Activated B cell treated with CpG ODN at 0.5 μM for 24 hours (primary cell): ENCODE measurements at regions of chr12 and their contacts with region 1.

Region 1: DNA sequence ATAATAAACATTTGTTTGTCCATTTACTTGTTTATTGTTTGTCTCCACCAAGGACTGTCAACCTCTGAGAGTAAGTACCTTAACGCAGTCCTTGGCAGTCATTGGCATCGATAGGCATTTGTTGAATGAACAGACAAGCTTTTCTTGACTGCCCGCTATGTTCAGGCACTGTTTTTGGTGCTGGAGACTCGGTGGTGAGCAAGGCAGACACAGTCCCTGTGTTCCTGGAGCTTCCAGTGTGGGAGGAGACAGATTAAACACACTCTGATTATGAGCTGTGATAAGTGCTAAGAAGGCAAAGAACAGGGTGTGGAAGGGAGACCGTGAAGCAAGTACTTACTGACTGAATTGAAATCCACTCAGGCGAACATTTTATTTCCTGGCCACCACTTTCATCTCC is 1.2 kb downstream of the ATP6V0A2 start:
- DNase-seq: no peak
- ATAC-seq: no peak
- H3K4me3 Mint-ChIP-seq: peak overlapping the region; percentile 92
- H3K27ac Mint-ChIP-seq: peak overlapping the region; percentile 80
- H3K4me1 Mint-ChIP-seq: peaks cover 37% of the 10 kb centered on the region
- H3K27me3 Mint-ChIP-seq: no peaks in the 10 kb centered on the region
- CTCF ChIP-seq: no peak

Region 2: GRCh38 chr12:123643911-123644310 is 69.5 kb before region 1 on chr12:
- CTCF ChIA-PET with region 1: no interaction called
- POLR2A ChIA-PET with region 1: interaction called, 11 read pairs
- intact Hi-C with region 1: no loop called
- DNase-seq: no peak
- ATAC-seq: no peak
- H3K4me3 Mint-ChIP-seq: no peak overlapping the region
- H3K27ac Mint-ChIP-seq: no peak overlapping the region
- H3K4me1 Mint-ChIP-seq: no peaks in the 10 kb centered on the region
- H3K27me3 Mint-ChIP-seq: no peaks in the 10 kb centered on the region
- CTCF ChIP-seq: no peak

Region 3: DNA sequence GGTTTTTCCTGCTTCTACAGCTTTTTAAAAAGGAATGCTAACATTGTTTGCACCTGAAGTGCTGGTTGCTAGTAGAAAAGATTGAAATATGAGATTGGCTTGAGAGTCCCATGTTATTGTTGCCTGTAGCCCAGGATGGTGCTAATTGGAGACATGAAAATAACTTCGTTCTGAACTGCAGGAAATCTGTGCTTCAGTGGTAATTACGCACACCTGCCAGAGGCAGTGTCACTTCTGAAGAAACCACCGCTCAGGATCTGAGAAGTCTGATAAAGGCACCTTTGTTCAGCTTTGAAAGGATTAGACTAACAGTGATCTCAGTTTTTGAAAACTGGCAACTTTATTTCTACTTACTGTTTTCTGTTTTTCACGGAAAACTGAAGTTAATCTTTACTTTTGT is 16.8 kb before region 1 on chr12:
- CTCF ChIA-PET with region 1: no interaction called
- POLR2A ChIA-PET with region 1: interaction called, 4 read pairs
- intact Hi-C with region 1: loop called (anchors 1 kb)
- DNase-seq: no peak
- ATAC-seq: no peak
- H3K4me3 Mint-ChIP-seq: no peak overlapping the region
- H3K27ac Mint-ChIP-seq: no peak overlapping the region
- H3K4me1 Mint-ChIP-seq: no peaks in the 10 kb centered on the region
- H3K27me3 Mint-ChIP-seq: no peaks in the 10 kb centered on the region
- CTCF ChIP-seq: no peak

Region 4: DNA sequence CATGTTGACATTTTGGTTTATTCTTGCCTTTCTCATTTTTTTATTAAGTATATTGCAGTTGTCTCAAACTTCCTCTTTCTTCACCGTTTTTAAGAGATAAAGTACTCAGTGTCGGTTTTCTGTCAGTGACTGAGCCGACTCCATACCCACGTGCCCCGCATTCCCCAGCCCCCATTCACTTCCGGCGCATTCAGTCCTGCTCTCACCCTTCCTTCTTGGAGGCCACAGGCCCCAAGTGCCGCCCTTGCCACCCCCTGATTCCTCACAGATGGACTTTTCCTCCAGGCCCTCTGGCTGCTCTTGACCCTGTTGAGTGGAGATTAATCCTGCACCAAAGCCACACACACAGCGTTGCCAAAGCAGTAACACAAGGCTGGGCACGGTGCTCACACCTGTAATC is 29.6 kb after region 1 on chr12:
- CTCF ChIA-PET with region 1: no interaction called
- POLR2A ChIA-PET with region 1: interaction called, 14 read pairs
- intact Hi-C with region 1: no loop called
- DNase-seq: no peak
- ATAC-seq: peak; percentile 57
- H3K4me3 Mint-ChIP-seq: peak overlapping the region; percentile 52
- H3K27ac Mint-ChIP-seq: peak overlapping the region; percentile 88
- H3K4me1 Mint-ChIP-seq: peaks cover 30% of the 10 kb centered on the region
- H3K27me3 Mint-ChIP-seq: no peaks in the 10 kb centered on the region
- CTCF ChIP-seq: no peak

Region 5: DNA sequence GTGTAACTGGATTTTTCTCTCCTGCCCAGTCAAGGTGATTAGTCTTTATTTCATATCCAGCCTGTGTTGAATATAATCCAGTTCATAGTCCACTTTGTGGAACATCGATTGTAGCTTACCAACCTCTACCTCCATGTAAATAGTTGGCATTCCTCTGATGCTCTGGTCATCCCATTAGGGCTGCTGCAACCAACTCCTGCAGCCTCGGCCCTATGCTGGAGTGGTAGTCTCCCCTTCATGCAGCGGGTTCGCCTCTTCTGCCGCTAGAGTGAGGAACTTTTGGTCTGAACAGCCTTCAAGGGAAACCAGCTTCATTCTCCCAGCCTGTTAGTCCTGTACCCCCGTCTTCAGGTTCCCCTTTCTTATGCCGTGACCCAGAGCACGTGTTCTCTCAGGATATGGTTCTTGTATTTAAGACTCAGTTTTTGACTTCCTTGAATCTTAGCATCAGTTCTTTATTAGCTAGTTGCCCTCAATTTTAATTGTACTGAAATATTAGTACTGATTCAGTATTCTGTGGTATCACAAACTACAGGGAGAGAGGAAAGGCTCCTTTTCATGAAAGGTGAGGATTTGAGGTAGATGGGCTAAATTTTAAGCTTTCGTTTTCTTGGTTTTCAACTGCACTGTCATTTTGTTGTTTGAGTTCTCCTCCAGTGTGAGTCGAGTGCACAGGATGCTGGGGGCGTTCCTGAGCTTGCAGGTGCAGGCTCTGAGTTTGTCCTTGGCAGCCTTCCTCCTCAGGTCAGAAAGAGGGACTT is 292.9 kb after region 1 on chr12:
- CTCF ChIA-PET with region 1: no interaction called
- POLR2A ChIA-PET with region 1: no interaction called
- intact Hi-C with region 1: no loop called
- DNase-seq: no peak
- ATAC-seq: peak; percentile 73
- H3K4me3 Mint-ChIP-seq: peak overlapping the region; percentile 46
- H3K27ac Mint-ChIP-seq: peak overlapping the region; percentile 77
- H3K4me1 Mint-ChIP-seq: peaks cover 30% of the 10 kb centered on the region
- H3K27me3 Mint-ChIP-seq: no peaks in the 10 kb centered on the region
- CTCF ChIP-seq: no peak